GM10248 (cell line): ENCODE measurements at regions of chr10 and their contacts with region 1.

Region 1: GRCh38 chr10:44386546-44387052 is 1.7 kb upstream of the CXCL12 start:
- DNase-seq: peak; percentile 85
- CTCF ChIP-seq: peak; percentile 76

Region 2: GRCh38 chr10:43671656-43672531 is 714.7 kb before region 1 on chr10:
- CTCF ChIA-PET with region 1: interaction called, 22 read pairs
- POLR2A ChIA-PET with region 1: no interaction called
- DNase-seq: peak; percentile 75
- CTCF ChIP-seq: peak; percentile 70

Region 3: DNA sequence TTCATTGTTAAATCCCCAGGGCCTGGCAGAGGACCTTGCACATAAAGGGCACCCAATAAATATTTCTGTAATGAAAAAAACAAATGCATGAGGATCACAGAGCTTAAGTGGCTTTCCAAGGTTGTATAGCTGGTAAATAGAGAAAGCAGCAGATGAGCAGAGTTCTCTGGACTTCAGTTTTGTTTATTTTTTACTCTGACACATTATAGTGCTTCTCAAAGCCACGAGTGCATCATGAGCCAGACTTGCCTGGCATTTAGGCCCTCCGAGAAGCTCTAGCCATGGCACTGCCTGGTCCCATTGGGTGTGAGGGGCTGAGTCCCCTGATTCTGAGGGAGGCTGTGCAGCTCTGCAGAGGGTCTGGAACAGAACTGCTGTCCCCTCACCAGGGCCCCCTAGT is 650.7 kb before region 1 on chr10:
- CTCF ChIA-PET with region 1: no interaction called
- POLR2A ChIA-PET with region 1: no interaction called
- DNase-seq: no peak
- CTCF ChIP-seq: no peak

Region 4: DNA sequence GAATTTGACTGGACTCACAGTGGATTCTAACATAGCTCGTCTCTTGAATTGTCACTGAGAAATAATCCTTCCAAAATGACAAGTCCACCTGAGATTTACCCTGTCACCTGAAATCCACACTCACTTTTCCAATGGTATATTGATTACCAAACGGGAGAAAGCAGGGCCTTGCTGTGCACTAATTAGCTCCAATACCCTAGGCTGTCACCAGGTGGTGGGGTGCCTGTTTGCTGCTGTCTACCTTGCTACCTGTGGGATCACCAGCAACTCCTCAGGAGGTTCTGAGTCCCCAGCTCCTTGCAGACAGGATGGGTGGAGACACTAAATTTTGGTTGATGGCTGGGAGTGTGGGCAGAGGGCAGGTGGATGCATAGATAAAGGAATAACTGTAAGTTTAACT is 500.8 kb before region 1 on chr10:
- CTCF ChIA-PET with region 1: interaction called, 11 read pairs
- POLR2A ChIA-PET with region 1: no interaction called
- DNase-seq: no peak
- CTCF ChIP-seq: peak; percentile 12

Region 5: DNA sequence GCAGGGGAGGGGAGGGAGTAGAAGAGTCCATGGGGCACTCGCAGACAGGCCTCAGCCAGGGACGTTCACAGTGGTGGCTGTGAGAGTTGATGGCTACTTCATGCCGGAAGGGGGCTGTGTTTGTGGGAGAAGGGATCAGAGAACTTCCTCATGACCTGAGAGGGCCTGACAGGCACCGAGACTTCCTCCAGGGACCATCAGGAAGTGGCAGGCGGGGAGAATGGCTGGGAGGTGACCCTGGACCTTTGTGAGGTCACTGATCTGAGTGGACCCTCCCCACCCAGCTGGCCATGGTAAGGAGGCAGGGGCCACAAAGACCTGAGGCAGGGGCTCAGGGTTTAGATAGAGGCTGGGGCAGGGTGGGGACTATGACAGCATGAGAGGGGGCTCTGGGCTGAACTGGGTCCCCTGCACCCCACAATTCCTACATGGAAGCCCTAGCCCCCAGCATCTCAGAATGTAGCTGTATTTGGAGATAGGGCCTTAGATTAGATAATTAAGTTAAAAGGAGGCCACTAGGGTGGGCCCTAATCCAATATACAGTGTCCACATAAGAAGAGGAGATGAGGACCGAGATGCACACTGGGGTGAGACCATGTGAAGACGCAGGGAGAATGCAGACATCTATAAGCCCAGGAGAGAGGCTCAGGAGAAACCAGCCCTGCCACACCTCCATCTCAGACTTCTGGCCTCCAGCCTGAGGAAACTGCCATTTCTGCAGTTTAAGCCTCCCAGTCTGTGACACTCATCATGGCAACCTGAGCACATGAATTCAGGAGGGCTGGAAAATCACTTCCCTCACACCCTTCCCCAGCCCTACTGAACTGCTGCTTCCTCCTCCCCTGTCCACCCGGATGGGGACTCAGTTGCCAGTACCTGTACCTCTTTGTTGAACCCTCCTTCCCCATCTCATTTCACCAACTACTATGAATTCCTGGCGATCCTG is 464.0 kb before region 1 on chr10:
- CTCF ChIA-PET with region 1: no interaction called
- POLR2A ChIA-PET with region 1: no interaction called
- DNase-seq: no peak
- CTCF ChIP-seq: no peak

Region 6: DNA sequence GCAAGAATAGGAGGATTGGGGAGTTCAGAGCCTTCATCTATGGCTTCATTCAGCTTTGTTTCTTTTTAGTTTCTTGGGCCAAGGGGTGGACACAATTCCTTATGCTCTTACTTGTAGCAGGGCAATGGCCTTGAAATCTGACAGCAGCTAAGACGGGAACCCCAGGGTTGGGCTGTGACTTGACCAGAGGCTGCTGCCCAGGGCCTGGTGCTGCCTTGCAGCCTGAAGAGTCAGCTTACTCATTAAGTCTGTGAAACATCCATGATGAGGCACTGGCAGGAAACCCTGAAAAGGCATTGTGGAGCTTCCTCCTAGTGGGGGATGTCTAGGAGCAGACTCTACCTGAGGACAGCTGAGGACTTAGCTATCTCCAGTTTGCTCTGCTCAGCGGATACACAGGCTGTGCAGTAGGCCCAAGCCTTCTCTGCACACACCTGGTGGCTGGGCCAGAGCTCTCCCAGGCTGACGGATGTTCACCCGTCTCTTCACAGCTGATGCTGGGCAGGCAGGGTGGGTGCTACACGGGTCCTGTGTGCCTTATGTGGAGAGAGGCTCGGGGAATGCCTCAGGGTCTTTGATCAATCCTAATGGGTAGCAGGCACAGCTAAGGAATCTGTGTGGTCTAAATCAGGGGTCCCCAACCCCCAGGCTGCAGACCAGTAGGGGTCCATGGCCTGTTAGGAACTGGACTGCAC is 19.5 kb before region 1 on chr10:
- CTCF ChIA-PET with region 1: interaction called, 14 read pairs
- POLR2A ChIA-PET with region 1: no interaction called
- DNase-seq: no peak
- CTCF ChIP-seq: no peak